ENCODE measurements at regions of chr15 and their contacts with region 1.

Region 1: DNA sequence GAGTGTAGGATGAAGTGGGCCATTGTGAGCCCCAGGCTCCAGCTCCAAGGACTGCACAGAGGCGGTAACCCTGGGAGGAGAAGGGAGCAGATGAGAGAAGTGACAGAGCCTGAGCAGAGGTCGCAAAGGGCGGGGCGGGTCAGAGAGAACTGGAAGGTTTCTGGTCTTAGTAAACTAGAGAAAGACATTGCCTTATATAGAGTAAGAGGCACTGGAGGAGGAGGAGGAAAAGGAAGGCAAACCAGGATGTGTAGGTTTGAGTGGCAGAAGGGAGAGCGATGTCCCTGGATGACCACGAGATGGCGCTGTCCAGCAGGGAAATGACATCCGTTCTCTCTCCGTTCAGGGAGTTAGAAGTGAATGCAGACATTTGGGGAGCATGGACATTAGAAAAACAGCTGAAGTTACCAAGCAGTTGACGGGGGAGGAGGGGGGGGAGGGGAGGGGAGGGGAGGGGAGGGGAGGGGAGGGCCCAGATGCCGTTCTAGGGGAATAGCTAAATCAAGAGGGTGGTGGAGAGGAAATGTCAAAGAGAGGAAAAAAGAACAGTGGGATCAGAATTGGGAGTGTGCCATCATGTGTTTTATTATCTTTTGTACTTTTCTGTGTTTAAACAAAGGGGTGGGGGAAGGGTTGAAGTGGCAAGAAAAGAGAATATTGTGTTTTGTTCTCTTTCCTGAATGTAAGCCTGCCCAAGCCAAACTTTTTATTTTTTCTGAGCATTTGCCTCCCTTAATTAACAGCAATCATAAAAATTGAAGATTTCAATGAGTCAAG is 48.8 kb downstream of the STARD5 start:
- DNase-seq: peak; percentile 74
- ATAC-seq: peak; percentile 85

Region 2: GRCh38 chr15:81400640-81401236 is 125.6 kb after region 1 on chr15:
- intact Hi-C with region 1: loop called (anchors 1 to 2 kb)
- DNase-seq: no peak
- ATAC-seq: peak in 1 of 2 donors; percentile 44

Region 3: GRCh38 chr15:81419332-81419943 is 144.3 kb after region 1 on chr15:
- intact Hi-C with region 1: no loop called
- DNase-seq: no peak
- ATAC-seq: no peak

Region 4: DNA sequence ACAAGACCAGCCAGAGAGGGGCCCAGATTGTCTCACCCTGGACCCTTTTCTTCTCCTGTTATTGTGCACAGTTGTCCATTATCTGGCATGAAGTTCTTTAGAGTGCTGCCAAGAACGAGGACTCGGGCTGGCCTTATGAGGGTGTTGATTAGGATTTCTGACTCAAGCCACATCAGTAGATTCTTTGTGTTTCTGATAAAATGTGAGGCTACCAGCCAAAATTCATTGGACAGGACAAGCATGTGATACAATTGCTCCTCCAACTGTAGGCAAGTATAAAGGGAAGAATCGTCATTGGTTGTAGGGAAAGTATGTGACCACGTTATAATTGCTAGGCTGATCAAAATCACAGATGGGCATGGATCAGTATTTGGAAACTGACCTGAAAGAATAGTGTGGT is 198.1 kb after region 1 on chr15:
- intact Hi-C with region 1: no loop called
- DNase-seq: no peak
- ATAC-seq: no peak

Measured in left cardiac atrium (tissue), 4 donors.